ENCODE measurements at regions of chr2 and their contacts with region 1.

Region 1: GRCh38 chr2:13669607-13670006 is 952.9 kb downstream of the TRIB2 start:
- DNase-seq: no peak

Region 2: DNA sequence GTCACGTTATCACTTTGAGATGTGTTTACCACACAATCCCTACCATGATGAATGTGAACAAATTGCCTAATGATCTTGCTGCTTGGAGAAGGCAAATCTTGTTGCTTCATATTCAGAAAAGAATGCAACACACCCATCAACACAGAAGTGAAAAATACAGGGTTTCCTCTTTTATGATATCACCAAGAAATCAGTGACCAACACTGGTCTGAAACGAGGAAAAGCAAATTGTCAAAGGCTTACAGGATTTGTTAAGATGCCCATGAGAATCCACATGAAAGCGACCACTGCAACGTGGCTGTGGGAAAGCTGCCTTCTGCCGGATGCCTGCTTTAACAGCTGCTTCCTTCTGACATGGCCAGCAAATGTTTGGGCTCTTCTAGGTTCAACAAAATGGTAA is 565.3 kb after region 1 on chr2:
- intact Hi-C with region 1: loop called in 1 of 2 experiments (anchors 5 kb)
- DNase-seq: no peak

Region 3: DNA sequence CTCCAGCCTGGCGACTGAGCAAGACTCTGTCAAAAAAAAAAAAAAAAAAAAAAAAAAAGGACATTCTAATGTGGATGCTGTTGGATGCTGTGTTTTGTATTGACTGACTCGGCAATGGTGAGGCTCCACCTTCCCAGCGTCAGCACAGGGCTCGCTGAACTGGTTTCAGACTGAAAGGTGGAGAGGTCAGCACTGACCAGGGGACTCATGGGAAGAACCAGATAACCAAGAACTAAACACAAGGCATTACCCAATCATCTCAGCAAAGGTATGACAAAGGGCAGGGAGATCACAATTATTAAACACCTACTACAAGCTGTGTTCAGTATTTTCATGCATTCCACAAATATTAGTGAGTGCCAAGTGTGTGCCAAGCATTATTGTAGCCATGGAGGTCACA is 1066.1 kb after region 1 on chr2:
- intact Hi-C with region 1: no loop called
- DNase-seq: no peak